ENCODE measurements at regions of chr12 and their contacts with region 1.

Region 1: DNA sequence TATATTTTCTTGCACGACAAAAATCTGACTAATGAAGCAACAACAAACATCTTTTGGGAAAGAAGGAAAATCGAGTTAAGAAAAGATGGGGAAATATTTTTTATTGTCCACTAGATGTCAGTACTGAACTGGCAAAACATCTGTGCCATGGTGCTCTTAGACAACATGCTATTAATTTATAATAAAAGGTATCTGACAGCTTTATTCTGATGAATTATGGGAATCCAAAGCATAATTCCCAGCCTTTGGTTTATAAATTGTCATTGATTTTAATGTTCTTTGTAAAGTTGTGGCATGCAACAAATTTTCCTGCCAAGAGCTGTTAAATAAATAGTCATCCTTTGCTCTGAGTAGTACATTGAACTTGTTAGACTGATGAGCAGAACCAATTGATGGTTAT is 231.2 kb downstream of the ETNK1 start:
- DNase-seq: no peak
- ATAC-seq: no peak
- H3K4me3 ChIP-seq: no peak overlapping the region
- H3K4me3 Mint-ChIP-seq: no peak overlapping the region
- H3K27ac ChIP-seq: no peak overlapping the region
- H3K27ac Mint-ChIP-seq: no peak overlapping the region
- H3K4me1 ChIP-seq: no peaks in the 10 kb centered on the region
- H3K4me1 Mint-ChIP-seq: no peaks in the 10 kb centered on the region
- H3K27me3 ChIP-seq: no peaks in the 10 kb centered on the region
- H3K27me3 Mint-ChIP-seq: peaks cover 0 to 24% (median 14%) of the 10 kb centered on the region in 5 donors

Region 2: GRCh38 chr12:22615963-22616501 is 240.1 kb before region 1 on chr12:
- CTCF ChIA-PET with region 1: no interaction called
- POLR2A ChIA-PET with region 1: no interaction called
- intact Hi-C with region 1: no loop called
- DNase-seq: no peak
- ATAC-seq: no peak
- H3K4me3 ChIP-seq: no peak overlapping the region
- H3K4me3 Mint-ChIP-seq: no peak overlapping the region
- H3K27ac ChIP-seq: no peak overlapping the region
- H3K27ac Mint-ChIP-seq: no peak overlapping the region
- H3K4me1 ChIP-seq: no peaks in the 10 kb centered on the region
- H3K4me1 Mint-ChIP-seq: no peaks in the 10 kb centered on the region
- H3K27me3 ChIP-seq: no peaks in the 10 kb centered on the region
- H3K27me3 Mint-ChIP-seq: peaks cover 0 to 16% (median 0%) of the 10 kb centered on the region in 5 donors

Region 3: DNA sequence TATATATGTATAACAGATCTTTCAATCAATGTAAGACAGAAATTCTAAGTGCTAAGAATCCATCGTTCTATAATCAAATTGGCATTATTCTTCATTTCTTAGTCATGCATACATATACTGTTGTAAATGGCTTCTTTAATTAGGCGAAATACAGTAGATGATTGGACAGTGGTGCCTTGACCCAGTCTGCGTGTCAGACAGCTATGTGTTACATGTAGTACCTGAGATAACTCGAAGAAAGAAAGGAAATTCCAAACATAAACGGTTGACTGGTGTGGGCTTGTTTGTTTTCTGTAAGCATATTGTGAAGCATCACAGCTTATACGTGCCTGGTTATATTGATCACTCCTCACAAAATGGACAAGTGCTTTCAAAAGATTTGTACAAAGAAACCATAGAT is 20.7 kb before region 1 on chr12:
- CTCF ChIA-PET with region 1: interaction called, 11 read pairs
- POLR2A ChIA-PET with region 1: no interaction called
- intact Hi-C with region 1: no loop called
- DNase-seq: no peak
- ATAC-seq: no peak
- H3K4me3 ChIP-seq: no peak overlapping the region
- H3K4me3 Mint-ChIP-seq: no peak overlapping the region
- H3K27ac ChIP-seq: no peak overlapping the region
- H3K27ac Mint-ChIP-seq: no peak overlapping the region
- H3K4me1 ChIP-seq: no peaks in the 10 kb centered on the region
- H3K4me1 Mint-ChIP-seq: no peaks in the 10 kb centered on the region
- H3K27me3 ChIP-seq: no peaks in the 10 kb centered on the region
- H3K27me3 Mint-ChIP-seq: peaks cover 0 to 4% (median 0%) of the 10 kb centered on the region in 5 donors

Measured in naive thymus-derived CD4-positive, alpha-beta T cell (primary cell).